AG04450 (cell line): ENCODE measurements at regions of chr3 and their contacts with region 1.

Region 1: DNA sequence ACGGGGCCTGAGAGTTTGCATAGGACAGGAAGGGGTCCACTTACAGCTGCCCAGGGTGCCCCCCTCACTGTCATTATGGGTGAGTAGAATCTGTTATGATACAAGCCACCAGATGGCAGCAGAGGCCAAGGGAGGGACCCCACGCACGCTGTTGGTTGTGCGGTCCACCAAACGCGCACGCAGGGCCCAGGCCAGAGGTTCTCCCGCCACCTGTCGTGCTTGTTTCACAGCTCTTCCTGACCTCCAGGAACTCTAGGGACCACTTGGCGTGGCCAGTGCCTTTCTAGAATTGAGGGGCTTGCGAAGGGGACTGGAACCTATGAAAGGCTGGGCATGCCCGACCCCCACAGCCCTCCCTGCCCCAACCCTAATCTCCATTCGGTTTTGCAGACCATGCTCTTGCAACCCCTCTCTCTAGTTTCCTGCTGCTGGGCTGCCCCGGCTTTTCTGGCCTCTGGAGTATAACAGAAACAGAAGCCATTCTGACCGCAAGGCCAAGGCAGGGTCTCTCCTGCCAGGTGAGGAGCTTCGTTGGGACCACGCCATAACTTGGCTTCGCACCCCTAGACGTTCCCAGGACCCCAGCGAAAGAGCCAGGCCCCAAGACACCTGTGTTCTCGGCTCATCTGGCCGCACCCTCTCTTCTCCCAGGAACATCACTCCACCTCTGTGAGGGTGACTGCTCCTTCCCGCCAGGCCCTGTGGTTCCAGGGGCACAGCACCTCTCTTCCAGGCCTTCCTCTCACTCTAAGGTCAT is 46.0 kb downstream of the ALDH1L1 start:
- DNase-seq: peak; percentile 8
- H3K4me3 ChIP-seq: no peak overlapping the region
- H3K27ac ChIP-seq: peak overlapping the region; percentile 11
- H3K27me3 ChIP-seq: peaks cover 21% of the 10 kb centered on the region
- CTCF ChIP-seq: peak; percentile 79

Region 2: GRCh38 chr3:126113733-126114442 is 20.5 kb before region 1 on chr3:
- CTCF ChIA-PET with region 1: no interaction called
- POLR2A ChIA-PET with region 1: no interaction called
- DNase-seq: no peak
- H3K4me3 ChIP-seq: no peak overlapping the region
- H3K27ac ChIP-seq: no peak overlapping the region
- H3K27me3 ChIP-seq: peaks cover 6% of the 10 kb centered on the region
- CTCF ChIP-seq: peak; percentile 42

Region 3: DNA sequence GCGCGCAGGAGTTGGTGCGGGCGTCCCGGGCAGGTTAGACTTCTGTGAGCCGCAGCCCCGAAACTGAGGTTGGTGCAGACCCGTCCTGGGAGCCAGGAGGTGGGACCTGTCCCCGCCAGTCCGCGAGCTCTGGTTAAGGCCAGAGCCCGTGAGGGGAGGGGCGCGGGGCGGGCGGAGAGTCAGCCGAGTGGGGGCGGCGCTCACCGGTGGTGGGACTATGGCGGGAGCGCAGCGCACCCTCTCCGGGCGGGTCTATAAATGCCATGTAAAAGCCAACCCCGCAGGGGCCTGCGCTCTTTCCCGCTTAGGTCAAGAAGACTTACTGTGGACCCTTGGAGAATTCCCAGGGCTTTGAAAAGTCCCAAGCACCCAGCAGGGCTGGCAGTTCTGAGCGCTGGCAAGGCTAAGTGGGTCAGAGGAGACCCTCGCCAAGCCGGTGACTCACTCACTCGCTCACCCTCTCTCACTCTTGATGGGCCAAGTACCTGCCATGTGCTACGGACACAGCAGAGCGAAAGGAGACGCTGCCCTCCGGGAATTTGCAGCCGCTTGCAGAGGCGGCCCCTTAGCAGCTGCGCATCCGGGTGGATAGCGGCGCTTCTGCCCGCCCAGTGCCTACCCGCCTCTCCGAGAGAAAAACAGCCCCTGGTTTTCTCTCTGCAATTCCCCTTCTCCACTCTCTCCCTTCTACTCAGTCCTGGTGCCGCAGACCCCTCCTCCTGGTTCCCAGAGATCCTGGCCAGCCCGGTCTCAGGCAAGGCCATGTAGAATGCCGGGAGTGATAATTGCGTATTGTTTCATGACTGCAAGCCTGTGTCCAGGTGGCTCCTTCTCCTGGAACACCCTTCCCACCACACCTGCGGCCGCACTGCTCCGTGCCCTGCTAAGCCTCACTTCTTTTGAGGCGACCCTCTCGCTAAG is 46.3 kb after region 1 on chr3 and contains the start of gene ALDH1L1:
- CTCF ChIA-PET with region 1: no interaction called
- POLR2A ChIA-PET with region 1: no interaction called
- DNase-seq: no peak
- H3K4me3 ChIP-seq: peak within 1 kb of the TSS; percentile 42
- H3K27ac ChIP-seq: no peak within 1 kb of the TSS
- H3K27me3 ChIP-seq: peaks cover 46% of the 10 kb centered on the region
- CTCF ChIP-seq: no peak
- polyA plus RNA-seq, gene ALDH1L1: not detected in 2 replicates

Region 4: DNA sequence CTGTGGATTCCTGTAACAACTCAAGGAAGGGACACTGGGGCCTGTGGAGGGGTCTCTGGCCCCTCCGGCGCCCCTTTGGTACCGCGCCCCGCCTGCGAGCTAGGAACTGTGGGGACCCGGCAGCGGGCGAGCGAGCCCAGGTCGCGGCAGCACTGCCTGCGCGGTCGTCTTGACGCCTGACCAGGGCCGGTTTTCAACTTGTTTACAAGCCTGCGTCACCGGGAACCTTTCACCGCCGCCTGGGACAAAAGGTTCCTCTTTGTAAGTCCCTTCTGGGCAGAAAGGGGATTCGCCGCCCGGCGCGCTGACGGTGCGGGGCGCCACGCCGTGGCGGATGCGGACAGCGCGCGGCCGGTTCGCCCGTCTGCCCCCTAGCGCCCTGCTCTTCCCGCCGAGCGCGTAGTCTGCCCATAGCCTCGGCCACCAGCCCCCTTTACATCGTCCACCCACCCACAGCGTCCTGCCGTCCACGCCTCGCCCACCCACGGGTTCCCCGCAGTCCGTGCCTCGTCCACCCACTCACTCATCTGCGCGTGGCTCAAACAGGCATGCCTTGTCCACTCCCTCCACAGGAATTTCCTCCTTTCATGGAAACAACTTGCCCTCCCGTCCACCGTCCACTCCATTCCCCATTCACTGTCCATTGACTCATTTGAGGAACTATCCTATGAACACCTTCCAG is 254.9 kb after region 1 on chr3:
- CTCF ChIA-PET with region 1: interaction called, 44 read pairs
- POLR2A ChIA-PET with region 1: no interaction called
- DNase-seq: peak; percentile 23
- H3K4me3 ChIP-seq: peak overlapping the region; percentile 57
- H3K27ac ChIP-seq: no peak overlapping the region
- H3K27me3 ChIP-seq: peaks cover 24% of the 10 kb centered on the region
- CTCF ChIP-seq: peak; percentile 91

Region 5: DNA sequence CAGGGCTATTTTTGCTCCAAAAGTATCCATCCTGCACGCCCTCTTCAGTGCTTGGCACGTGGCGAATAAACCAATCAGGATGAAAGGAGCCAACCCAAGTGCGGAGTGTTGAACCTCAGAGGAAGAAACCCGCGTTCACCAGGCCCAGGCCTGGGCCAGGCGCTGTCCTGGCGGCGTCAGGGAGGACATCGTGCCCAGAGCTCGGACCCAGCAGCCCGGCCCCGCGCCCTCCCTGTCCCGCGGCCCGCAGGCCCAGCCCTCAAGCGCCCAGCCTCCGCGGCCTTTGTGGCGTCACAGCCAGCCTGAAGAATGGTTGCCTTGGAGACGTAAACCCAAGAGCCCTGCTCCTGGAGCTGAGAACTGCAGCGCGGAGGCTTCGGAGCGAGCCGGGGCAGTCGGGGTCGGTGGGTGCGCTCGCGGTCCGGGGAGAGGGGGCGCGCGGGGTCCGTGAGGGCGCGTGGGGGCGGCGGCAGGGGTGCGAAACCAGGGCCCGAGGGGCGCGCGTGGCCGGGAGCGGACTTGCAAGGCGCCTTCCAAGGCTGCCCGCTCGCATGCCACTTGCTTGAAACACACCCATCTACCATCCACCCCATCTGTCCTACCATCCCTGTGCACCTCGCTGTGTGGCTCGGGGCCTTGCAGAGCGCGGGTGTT is 260.3 kb after region 1 on chr3 and contains the start of gene CFAP100:
- CTCF ChIA-PET with region 1: interaction called, 44 read pairs
- POLR2A ChIA-PET with region 1: no interaction called
- DNase-seq: no peak
- H3K4me3 ChIP-seq: peak within 1 kb of the TSS; percentile 7; the same call in 1 of the 2 replicates
- H3K27ac ChIP-seq: no peak within 1 kb of the TSS
- H3K27me3 ChIP-seq: peaks cover 42% of the 10 kb centered on the region
- CTCF ChIP-seq: no peak
- polyA plus RNA-seq, gene CFAP100: not detected in 2 replicates